ENCODE measurements at regions of chr15 and their contacts with region 1.

Region 1: DNA sequence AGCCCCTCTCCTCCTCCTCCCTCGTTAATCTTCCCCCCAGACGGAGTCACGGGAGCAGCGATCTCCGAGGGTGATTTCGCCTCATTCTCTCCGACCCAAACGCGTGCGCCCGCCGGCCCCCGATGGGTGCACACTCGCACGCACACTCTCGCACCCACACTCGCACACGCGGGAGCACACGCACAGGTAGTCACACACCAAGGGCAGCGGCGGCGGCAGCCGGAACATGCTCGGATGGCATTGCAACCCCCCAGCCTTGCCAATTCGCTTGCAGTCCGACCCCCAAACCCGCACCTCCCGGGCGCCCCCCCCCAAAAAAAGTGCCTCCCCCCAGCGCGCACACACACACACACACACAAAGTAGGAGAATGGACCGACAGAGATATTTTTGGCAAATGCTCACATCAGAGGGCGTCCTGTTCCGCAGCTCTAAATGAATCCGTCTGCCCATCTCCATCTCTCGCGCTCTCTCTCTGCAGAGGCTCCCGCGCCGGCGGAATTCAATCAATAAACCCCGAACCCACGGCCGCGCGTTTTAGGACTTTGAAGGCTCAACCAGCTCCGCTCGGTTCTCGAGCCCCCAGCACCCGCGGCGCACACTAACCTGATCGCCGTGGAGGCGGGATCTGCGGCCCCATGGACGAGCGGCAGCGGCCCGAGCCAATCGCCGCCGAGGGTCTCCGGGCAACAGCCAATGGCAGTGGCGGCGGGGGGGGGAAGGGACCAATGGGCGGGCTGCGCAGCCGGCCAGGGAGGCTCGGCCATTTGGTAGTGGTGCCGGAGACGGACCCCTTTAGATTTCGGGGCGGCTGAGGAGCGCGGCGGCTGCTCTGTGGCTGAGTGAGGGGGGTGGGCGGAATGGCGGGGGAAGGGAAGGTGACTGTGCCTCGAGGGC is at the start of gene ANP32A:
- DNase-seq: peak; percentile 97 to 99 (median 99)
- ATAC-seq: peak; percentile 81 to 92 (median 88)
- H3K4me3 ChIP-seq: peak within 1 kb of the TSS; percentile 80 to 98 (median 94)
- H3K27ac ChIP-seq: peak within 1 kb of the TSS; percentile 97 to 100 (median 100)
- H3K4me1 ChIP-seq: peaks cover 0 to 30% (median 19%) of the 10 kb centered on the region in 12 donors
- H3K27me3 ChIP-seq: no peaks in the 10 kb centered on the region
- CTCF ChIP-seq: no peak
- POLR2A ChIP-seq: peak in 1 of 2 donors; percentile 88
- total RNA-seq, gene ANP32A: 55.7 to 202 (median 142) TPM

Region 2: GRCh38 chr15:66966257-66966656 is 1854.3 kb before region 1 on chr15:
- intact Hi-C with region 1: no loop called
- DNase-seq: no peak
- ATAC-seq: no peak
- H3K4me3 ChIP-seq: no peak overlapping the region
- H3K27ac ChIP-seq: no peak overlapping the region
- H3K4me1 ChIP-seq: peaks cover 0 to 5% (median 0%) of the 10 kb centered on the region in 12 donors
- H3K27me3 ChIP-seq: peaks cover 0 to 6% (median 0%) of the 10 kb centered on the region in 9 donors
- CTCF ChIP-seq: peak in 2 of 12 donors; percentile 8 to 18
- POLR2A ChIP-seq: no peak

Region 3: GRCh38 chr15:68700455-68701123 is 120.0 kb before region 1 on chr15:
- intact Hi-C with region 1: loop called in 6 of 10 experiments (anchors 5 to 10 kb)
- DNase-seq: peak; percentile 77 to 86 (median 83)
- ATAC-seq: peak; percentile 81 to 92 (median 84)
- H3K4me3 ChIP-seq: peak overlapping the region in 7 of 12 donors; percentile 2 to 33 (median 16)
- H3K27ac ChIP-seq: peak overlapping the region; percentile 41 to 95 (median 88)
- H3K4me1 ChIP-seq: peaks cover 5 to 67% (median 53%) of the 10 kb centered on the region in 12 donors
- H3K27me3 ChIP-seq: no peaks in the 10 kb centered on the region
- CTCF ChIP-seq: no peak
- POLR2A ChIP-seq: no peak

Region 4: GRCh38 chr15:68775671-68776476 is 44.7 kb before region 1 on chr15:
- intact Hi-C with region 1: loop called in 8 of 10 experiments (anchors 5 kb)
- DNase-seq: peak; percentile 86 to 92 (median 88)
- ATAC-seq: peak; percentile 77 to 94 (median 89)
- H3K4me3 ChIP-seq: no peak overlapping the region
- H3K27ac ChIP-seq: peak overlapping the region; percentile 2 to 89 (median 59)
- H3K4me1 ChIP-seq: peaks cover 0 to 35% (median 22%) of the 10 kb centered on the region in 12 donors
- H3K27me3 ChIP-seq: no peaks in the 10 kb centered on the region
- CTCF ChIP-seq: no peak
- POLR2A ChIP-seq: no peak

Region 5: GRCh38 chr15:68783226-68784058 is 37.1 kb before region 1 on chr15:
- intact Hi-C with region 1: loop called in 9 of 10 experiments (anchors 5 kb)
- DNase-seq: peak in 2 of 5 donors; percentile 45 to 68
- ATAC-seq: peak in 3 of 4 donors; percentile 38 to 58 (median 41)
- H3K4me3 ChIP-seq: no peak overlapping the region
- H3K27ac ChIP-seq: peak overlapping the region in 4 of 12 donors; percentile 28 to 87 (median 68)
- H3K4me1 ChIP-seq: peaks cover 0 to 49% (median 23%) of the 10 kb centered on the region in 12 donors
- H3K27me3 ChIP-seq: no peaks in the 10 kb centered on the region
- CTCF ChIP-seq: peak; percentile 50 to 69 (median 62)
- POLR2A ChIP-seq: no peak

Region 6: GRCh38 chr15:68789534-68790241 is 30.9 kb before region 1 on chr15:
- intact Hi-C with region 1: loop called in 9 of 10 experiments (anchors 2 to 5 kb)
- DNase-seq: peak in 2 of 5 donors; percentile 45 to 55
- ATAC-seq: peak in 2 of 4 donors; percentile 4 to 8
- H3K4me3 ChIP-seq: no peak overlapping the region
- H3K27ac ChIP-seq: peak overlapping the region in 11 of 12 donors; percentile 29 to 92 (median 64)
- H3K4me1 ChIP-seq: peaks cover 27 to 81% (median 75%) of the 10 kb centered on the region in 12 donors
- H3K27me3 ChIP-seq: no peaks in the 10 kb centered on the region
- CTCF ChIP-seq: no peak
- POLR2A ChIP-seq: no peak

Region 7: GRCh38 chr15:68795298-68795848 is 25.2 kb before region 1 on chr15:
- intact Hi-C with region 1: loop called in 5 of 10 experiments (anchors 2 kb)
- DNase-seq: peak; percentile 92 to 95 (median 93)
- ATAC-seq: peak; percentile 92 to 97 (median 94)
- H3K4me3 ChIP-seq: peak overlapping the region in 8 of 12 donors; percentile 11 to 35 (median 20)
- H3K27ac ChIP-seq: peak overlapping the region; percentile 42 to 92 (median 77)
- H3K4me1 ChIP-seq: peaks cover 31 to 99% (median 93%) of the 10 kb centered on the region in 12 donors
- H3K27me3 ChIP-seq: no peaks in the 10 kb centered on the region
- CTCF ChIP-seq: no peak
- POLR2A ChIP-seq: peak in 1 of 2 donors; percentile 53

Region 8: DNA sequence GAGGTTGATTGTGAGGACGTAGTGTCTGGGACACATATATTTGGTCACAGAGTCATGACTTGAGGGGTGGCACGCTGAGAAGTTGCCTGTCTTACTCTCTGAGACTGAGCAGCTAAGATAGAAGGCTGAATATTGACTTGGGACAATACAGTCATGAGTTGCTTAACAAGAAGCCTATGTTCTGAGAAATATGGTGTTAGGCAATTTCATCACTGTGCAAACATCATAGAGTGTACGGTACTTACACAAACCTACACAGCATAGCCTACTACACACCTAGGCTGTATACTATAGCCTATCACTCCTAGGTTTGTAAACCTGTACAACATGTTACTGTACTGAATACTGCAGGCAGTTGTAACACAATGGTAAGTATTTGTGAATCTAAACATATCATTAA is 79.5 kb after region 1 on chr15:
- intact Hi-C with region 1: no loop called
- DNase-seq: no peak
- ATAC-seq: no peak
- H3K4me3 ChIP-seq: no peak overlapping the region
- H3K27ac ChIP-seq: no peak overlapping the region
- H3K4me1 ChIP-seq: no peaks in the 10 kb centered on the region
- H3K27me3 ChIP-seq: peaks cover 0 to 10% (median 0%) of the 10 kb centered on the region in 9 donors
- CTCF ChIP-seq: no peak
- POLR2A ChIP-seq: no peak

Measured in heart left ventricle (tissue), 16 donors.